MCF 10A (cell line): ENCODE measurements at regions of chr2 and their contacts with region 1.

Region 1: DNA sequence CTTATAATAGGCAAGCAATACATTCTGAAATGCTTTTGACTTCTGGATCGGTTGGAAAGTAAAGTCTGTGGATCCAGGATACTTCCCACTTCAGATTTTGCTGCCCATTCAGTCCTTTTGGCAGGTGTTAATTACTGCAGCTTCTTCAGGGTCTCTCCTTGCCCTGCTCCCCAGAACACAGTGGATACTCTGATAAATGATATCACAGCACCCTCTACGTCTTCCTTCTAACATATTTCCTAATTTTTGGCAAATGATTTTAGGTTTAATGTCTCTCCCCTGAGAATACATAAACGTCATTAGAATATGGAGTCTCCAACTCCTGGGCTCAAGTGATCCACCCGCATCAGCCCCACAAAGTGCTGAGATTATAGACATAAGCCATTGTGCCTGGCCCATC is 249.8 kb downstream of the NYAP2 start:
- DNase-seq: no peak
- H3K4me3 Mint-ChIP-seq: no peak overlapping the region
- H3K27ac Mint-ChIP-seq: no peak overlapping the region
- H3K4me1 Mint-ChIP-seq: no peaks in the 10 kb centered on the region
- H3K27me3 Mint-ChIP-seq: no peaks in the 10 kb centered on the region
- CTCF ChIP-seq: no peak

Region 2: DNA sequence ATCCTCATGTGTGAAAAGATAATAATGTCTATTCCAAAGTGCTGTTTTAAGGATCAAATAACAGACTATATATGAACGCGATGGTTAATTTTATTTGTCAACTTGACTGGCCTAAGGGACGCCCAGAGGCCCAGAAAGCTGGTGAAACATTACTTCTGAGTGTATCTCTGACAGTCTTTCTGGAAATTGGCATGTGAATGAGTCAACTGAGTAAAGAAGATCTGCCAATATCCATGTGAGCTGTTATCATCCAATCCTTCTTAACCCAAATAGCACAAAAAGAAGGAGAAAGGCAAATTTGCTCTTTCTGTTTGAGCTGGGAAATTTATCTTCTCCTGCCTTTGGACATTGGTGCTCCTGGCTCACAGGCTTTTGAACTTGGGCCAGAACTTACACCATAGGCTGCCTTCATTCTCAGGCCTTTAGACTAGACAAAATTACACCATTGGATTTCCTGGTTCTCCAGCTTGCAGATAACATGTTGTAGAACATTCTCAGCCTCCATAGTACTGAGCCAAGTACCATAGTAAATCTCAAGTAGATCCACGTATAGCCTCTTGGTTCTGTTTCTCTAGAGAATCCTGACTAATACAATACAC is 492.3 kb before region 1 on chr2:
- CTCF ChIA-PET with region 1: no interaction called
- POLR2A ChIA-PET with region 1: no interaction called
- intact Hi-C with region 1: no loop called
- DNase-seq: no peak
- H3K4me3 Mint-ChIP-seq: no peak overlapping the region
- H3K27ac Mint-ChIP-seq: no peak overlapping the region
- H3K4me1 Mint-ChIP-seq: no peaks in the 10 kb centered on the region
- H3K27me3 Mint-ChIP-seq: peaks cover 10% of the 10 kb centered on the region
- CTCF ChIP-seq: no peak

Region 3: DNA sequence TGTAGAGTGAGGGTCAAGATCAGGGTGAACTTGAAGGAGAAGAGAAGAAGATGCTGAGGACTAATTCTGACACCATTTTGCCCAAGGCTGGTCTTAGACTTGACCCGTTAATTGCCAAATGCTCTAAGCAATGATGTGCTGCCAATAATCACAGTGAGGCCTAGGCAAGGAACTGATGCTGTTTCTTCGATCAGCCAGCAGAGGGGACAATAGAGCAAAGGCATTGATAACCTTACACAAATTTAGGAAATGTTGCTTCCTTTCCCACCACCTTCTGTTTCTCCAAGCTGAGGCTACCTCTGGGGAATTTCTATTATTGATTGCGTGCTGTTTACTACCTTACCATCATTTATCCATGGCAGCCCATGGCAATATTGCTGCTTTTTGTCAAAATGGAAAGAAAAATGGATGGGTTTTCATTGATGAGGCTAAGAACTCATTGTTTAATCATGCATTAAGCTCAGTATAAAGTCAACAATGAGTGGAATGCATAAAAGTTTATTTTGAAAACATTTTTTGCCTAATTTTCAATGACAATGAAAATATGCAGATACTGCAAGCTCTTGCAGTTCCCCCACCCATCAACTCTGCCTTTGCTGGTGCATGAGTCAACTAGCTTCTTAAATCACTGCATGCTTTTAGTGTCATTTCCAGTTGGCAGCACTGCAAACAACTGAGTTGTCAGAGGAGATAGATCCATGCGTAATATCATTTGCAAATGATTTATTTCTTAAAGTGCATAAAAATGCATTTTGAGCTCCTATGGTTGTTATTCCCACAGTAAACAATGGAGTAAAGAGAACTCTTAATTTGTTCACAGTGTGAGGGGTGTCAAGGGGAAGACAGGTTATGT is 366.2 kb before region 1 on chr2:
- CTCF ChIA-PET with region 1: interaction called, 23 read pairs
- POLR2A ChIA-PET with region 1: no interaction called
- intact Hi-C with region 1: no loop called
- DNase-seq: peak; percentile 57
- H3K4me3 Mint-ChIP-seq: no peak overlapping the region
- H3K27ac Mint-ChIP-seq: no peak overlapping the region
- H3K4me1 Mint-ChIP-seq: no peaks in the 10 kb centered on the region
- H3K27me3 Mint-ChIP-seq: peaks cover 33% of the 10 kb centered on the region
- CTCF ChIP-seq: peak; percentile 75

Region 4: GRCh38 chr2:225630824-225631533 is 18.3 kb before region 1 on chr2:
- CTCF ChIA-PET with region 1: no interaction called
- POLR2A ChIA-PET with region 1: no interaction called
- intact Hi-C with region 1: no loop called
- DNase-seq: no peak
- H3K4me3 Mint-ChIP-seq: no peak overlapping the region
- H3K27ac Mint-ChIP-seq: no peak overlapping the region
- H3K4me1 Mint-ChIP-seq: no peaks in the 10 kb centered on the region
- H3K27me3 Mint-ChIP-seq: peaks cover 22% of the 10 kb centered on the region
- CTCF ChIP-seq: no peak